Right cardiac atrium (tissue), 5 donors: ENCODE measurements at regions of chr16 and their contacts with region 1.

Region 1: GRCh38 chr16:24504472-24505345 is 34.7 kb upstream of the RBBP6 start:
- DNase-seq: peak; percentile 41 to 63 (median 48)
- ATAC-seq: peak; percentile 84 to 89
- H3K4me3 ChIP-seq: no peak overlapping the region
- H3K27ac ChIP-seq: no peak overlapping the region
- H3K4me1 ChIP-seq: no peaks in the 10 kb centered on the region
- H3K27me3 ChIP-seq: no peaks in the 10 kb centered on the region

Region 2: GRCh38 chr16:24041826-24042631 is 462.7 kb before region 1 on chr16:
- intact Hi-C with region 1: loop called (anchors 2 to 5 kb)
- DNase-seq: peak; percentile 52 to 82 (median 68)
- ATAC-seq: peak; percentile 31 to 74
- H3K4me3 ChIP-seq: no peak overlapping the region
- H3K27ac ChIP-seq: no peak overlapping the region
- H3K4me1 ChIP-seq: no peaks in the 10 kb centered on the region
- H3K27me3 ChIP-seq: no peaks in the 10 kb centered on the region

Region 3: GRCh38 chr16:24423312-24423711 is 81.4 kb before region 1 on chr16:
- intact Hi-C with region 1: no loop called
- DNase-seq: no peak
- ATAC-seq: no peak
- H3K4me3 ChIP-seq: no peak overlapping the region
- H3K27ac ChIP-seq: no peak overlapping the region
- H3K4me1 ChIP-seq: no peaks in the 10 kb centered on the region
- H3K27me3 ChIP-seq: no peaks in the 10 kb centered on the region

Region 4: DNA sequence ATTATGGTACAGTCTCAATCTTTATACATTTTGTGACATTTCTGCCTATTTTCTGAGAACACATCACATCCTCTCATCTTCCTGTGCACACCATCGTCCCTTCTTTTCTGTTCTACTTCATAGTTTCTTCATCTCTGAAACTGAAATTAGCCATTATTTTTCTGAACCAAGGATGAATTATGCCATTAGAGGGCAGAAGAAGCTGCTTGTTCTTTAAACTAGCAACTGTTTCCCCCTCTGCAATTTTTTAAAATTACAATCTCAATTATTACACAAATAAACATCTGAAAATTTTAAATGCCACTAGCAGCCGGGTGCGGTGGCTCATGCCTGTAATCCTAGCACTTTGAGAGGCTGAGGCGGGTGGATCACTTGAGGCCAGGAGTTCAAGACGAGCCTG is 76.0 kb after region 1 on chr16:
- intact Hi-C with region 1: no loop called
- DNase-seq: no peak
- ATAC-seq: no peak
- H3K4me3 ChIP-seq: no peak overlapping the region
- H3K27ac ChIP-seq: no peak overlapping the region
- H3K4me1 ChIP-seq: no peaks in the 10 kb centered on the region
- H3K27me3 ChIP-seq: no peaks in the 10 kb centered on the region